ENCODE measurements at regions of chr6 and their contacts with region 1.

Region 1: GRCh38 chr6:107704347-107705013 is 119.6 kb downstream of the SCML4 start:
- DNase-seq: no peak
- H3K4me3 Mint-ChIP-seq: no peak overlapping the region
- H3K27ac Mint-ChIP-seq: no peak overlapping the region
- H3K4me1 Mint-ChIP-seq: peaks cover 6% of the 10 kb centered on the region
- H3K27me3 Mint-ChIP-seq: peaks cover 17% of the 10 kb centered on the region

Region 2: DNA sequence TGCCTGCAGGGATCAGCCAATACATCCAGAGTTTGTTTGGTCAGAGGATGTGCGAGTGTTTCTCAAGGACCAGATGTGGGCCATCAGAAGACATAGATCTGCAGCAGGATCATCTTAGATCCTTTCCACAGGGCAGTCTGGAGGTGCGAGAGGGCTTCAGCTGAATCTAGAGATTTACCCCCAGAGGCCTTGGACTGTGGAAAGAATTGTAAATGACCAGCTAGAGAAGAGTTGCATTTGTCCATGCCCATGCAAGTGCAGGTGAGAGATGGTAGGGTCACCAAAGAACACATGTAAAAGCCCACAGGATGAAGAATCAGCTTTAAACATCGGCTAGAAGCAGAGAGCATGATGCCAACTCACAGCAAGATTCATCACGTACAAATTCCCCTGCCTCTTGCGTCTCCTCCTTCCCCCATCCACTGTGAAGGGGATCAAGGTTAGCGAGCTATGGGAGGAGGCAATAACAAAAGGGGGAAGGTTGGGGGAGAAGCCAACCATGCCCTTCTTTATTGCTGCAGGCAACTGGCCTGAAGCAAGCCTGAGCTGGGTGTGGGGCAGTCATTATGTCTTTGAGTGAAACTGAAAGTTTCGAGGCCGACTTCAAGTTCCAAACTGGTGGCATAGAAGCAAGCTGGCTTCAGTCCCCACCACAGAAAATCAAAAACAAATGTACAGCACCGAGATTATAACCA is 36.2 kb after region 1 on chr6:
- intact Hi-C with region 1: loop called (anchors 5 kb)
- DNase-seq: no peak
- H3K4me3 Mint-ChIP-seq: peak overlapping the region; percentile 50
- H3K27ac Mint-ChIP-seq: peak overlapping the region; percentile 6
- H3K4me1 Mint-ChIP-seq: peaks cover 47% of the 10 kb centered on the region
- H3K27me3 Mint-ChIP-seq: peaks cover 20% of the 10 kb centered on the region

Measured in activated T-helper 2 cell treated with anti-CD3 and anti-CD28 coated beads, Interferon-gamma antibody, Interleukin-2, Interleukin-4, amounts not matched to agents 10 μg/mL and 5 μg/mL and 100 μg/mL, durations not matched to agents 14 hours and 24 hours and 36 hours (primary cell).